ENCODE measurements at regions of chr13 and their contacts with region 1.

Region 1: GRCh38 chr13:39616087-39616694 is 13.2 kb upstream of the LHFPL6 start:
- DNase-seq: peak; percentile 39 to 44 (median 40)
- H3K4me3 ChIP-seq: no peak overlapping the region
- H3K4me3 Mint-ChIP-seq: no peak overlapping the region
- H3K27ac ChIP-seq: no peak overlapping the region
- H3K27ac Mint-ChIP-seq: no peak overlapping the region
- H3K4me1 ChIP-seq: no peaks in the 10 kb centered on the region
- H3K4me1 Mint-ChIP-seq: no peaks in the 10 kb centered on the region
- H3K27me3 ChIP-seq: no peaks in the 10 kb centered on the region
- H3K27me3 Mint-ChIP-seq: peaks cover 0 to 7% of the 10 kb centered on the region in 2 donors

Region 2: GRCh38 chr13:38970380-38971051 is 645.7 kb before region 1 on chr13:
- CTCF ChIA-PET with region 1: interaction called, 10 read pairs
- POLR2A ChIA-PET with region 1: no interaction called
- intact Hi-C with region 1: no loop called
- DNase-seq: no peak
- H3K4me3 ChIP-seq: no peak overlapping the region
- H3K4me3 Mint-ChIP-seq: no peak overlapping the region
- H3K27ac ChIP-seq: no peak overlapping the region
- H3K27ac Mint-ChIP-seq: no peak overlapping the region
- H3K4me1 ChIP-seq: no peaks in the 10 kb centered on the region
- H3K4me1 Mint-ChIP-seq: no peaks in the 10 kb centered on the region
- H3K27me3 ChIP-seq: no peaks in the 10 kb centered on the region
- H3K27me3 Mint-ChIP-seq: peaks cover 0 to 2% of the 10 kb centered on the region in 2 donors

Region 3: DNA sequence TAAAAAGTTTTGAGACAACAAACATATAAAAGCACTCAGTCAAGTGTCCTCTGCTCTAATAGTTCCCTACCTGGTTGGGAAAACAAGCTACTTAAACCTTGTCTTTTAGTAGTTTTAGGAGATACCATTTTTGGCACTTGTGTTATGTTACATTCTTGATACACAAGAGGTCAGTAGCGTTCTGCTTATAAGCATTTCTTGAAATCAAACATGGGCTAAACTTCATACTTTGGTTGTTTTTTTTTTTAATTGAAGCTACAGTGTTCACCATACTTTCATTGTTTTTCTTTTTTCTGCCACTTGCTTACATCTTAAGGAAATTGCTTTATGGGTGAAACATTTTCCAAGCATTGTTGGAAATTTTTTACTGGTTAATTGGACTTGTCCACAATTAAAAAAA is 565.0 kb before region 1 on chr13:
- CTCF ChIA-PET with region 1: interaction called, 18 read pairs
- POLR2A ChIA-PET with region 1: no interaction called
- intact Hi-C with region 1: loop called (anchors 1 kb)
- DNase-seq: peak in 4 of 5 donors; percentile 19 to 26 (median 22)
- H3K4me3 ChIP-seq: no peak overlapping the region
- H3K4me3 Mint-ChIP-seq: no peak overlapping the region
- H3K27ac ChIP-seq: no peak overlapping the region
- H3K27ac Mint-ChIP-seq: no peak overlapping the region
- H3K4me1 ChIP-seq: no peaks in the 10 kb centered on the region
- H3K4me1 Mint-ChIP-seq: peaks cover 4 to 12% (median 7%) of the 10 kb centered on the region in 4 donors
- H3K27me3 ChIP-seq: no peaks in the 10 kb centered on the region
- H3K27me3 Mint-ChIP-seq: no peaks in the 10 kb centered on the region

Region 4: GRCh38 chr13:39144941-39145533 is 471.2 kb before region 1 on chr13:
- CTCF ChIA-PET with region 1: interaction called, 12 read pairs
- POLR2A ChIA-PET with region 1: no interaction called
- intact Hi-C with region 1: no loop called
- DNase-seq: peak in 1 of 5 donors; percentile 10
- H3K4me3 ChIP-seq: no peak overlapping the region
- H3K4me3 Mint-ChIP-seq: no peak overlapping the region
- H3K27ac ChIP-seq: no peak overlapping the region
- H3K27ac Mint-ChIP-seq: peak overlapping the region in 1 of 7 donors; percentile 27
- H3K4me1 ChIP-seq: no peaks in the 10 kb centered on the region
- H3K4me1 Mint-ChIP-seq: peaks cover 5 to 15% (median 7%) of the 10 kb centered on the region in 4 donors
- H3K27me3 ChIP-seq: no peaks in the 10 kb centered on the region
- H3K27me3 Mint-ChIP-seq: peaks cover 5 to 11% of the 10 kb centered on the region in 2 donors

Region 5: DNA sequence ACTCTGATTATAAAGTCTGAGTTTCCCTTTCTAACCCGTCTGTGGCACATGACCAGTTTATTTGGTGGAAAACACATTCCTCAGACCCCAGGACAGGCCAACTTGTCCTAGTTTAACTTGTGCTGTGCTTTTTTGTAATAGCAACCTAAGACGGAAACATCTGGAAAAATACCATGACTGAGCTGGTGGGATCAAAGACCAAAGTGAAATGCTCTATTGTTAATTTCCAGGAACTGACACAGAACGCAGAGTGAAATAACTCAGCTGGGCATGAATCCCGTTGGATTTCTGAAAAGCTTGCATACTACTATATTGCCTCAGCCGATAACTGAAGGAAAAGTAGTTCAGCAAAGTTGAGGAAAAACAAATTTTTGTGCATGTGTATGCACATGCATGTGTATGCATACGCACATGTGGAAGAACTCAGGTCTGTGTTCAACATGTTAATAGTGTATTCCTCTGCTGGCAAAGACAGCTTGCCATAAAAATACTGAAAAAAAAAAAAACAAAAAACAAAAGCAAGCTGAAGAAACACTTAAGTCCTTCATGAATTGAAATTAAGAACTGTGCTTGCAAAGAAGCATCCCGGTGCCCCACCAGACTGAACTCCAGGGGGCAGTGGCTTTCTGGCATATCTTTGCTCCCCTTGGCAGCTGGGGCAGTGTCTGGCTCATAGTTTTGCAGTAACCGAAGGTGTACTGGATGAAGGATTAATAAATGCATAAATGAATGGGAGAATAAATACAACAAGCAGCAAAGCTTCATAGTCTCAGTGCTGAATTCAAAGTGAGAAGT is 201.0 kb before region 1 on chr13:
- CTCF ChIA-PET with region 1: no interaction called
- POLR2A ChIA-PET with region 1: no interaction called
- intact Hi-C with region 1: loop called (anchors 10 kb)
- DNase-seq: no peak
- H3K4me3 ChIP-seq: no peak overlapping the region
- H3K4me3 Mint-ChIP-seq: no peak overlapping the region
- H3K27ac ChIP-seq: no peak overlapping the region
- H3K27ac Mint-ChIP-seq: no peak overlapping the region
- H3K4me1 ChIP-seq: no peaks in the 10 kb centered on the region
- H3K4me1 Mint-ChIP-seq: no peaks in the 10 kb centered on the region
- H3K27me3 ChIP-seq: no peaks in the 10 kb centered on the region
- H3K27me3 Mint-ChIP-seq: peaks cover 5 to 6% of the 10 kb centered on the region in 2 donors

Region 6: GRCh38 chr13:39602277-39602613 is 13.9 kb before region 1 on chr13:
- CTCF ChIA-PET with region 1: interaction called, 10 read pairs
- POLR2A ChIA-PET with region 1: no interaction called
- intact Hi-C with region 1: no loop called
- DNase-seq: no peak
- H3K4me3 ChIP-seq: peak overlapping the region in 1 of 2 donors; percentile 30
- H3K4me3 Mint-ChIP-seq: peak overlapping the region; percentile 46 to 86 (median 68)
- H3K27ac ChIP-seq: no peak overlapping the region
- H3K27ac Mint-ChIP-seq: no peak overlapping the region
- H3K4me1 ChIP-seq: peaks cover 7% of the 10 kb centered on the region
- H3K4me1 Mint-ChIP-seq: peaks cover 6 to 16% (median 12%) of the 10 kb centered on the region in 4 donors
- H3K27me3 ChIP-seq: peaks cover 13% of the 10 kb centered on the region
- H3K27me3 Mint-ChIP-seq: peaks cover 25 to 30% of the 10 kb centered on the region in 2 donors

Region 7: GRCh38 chr13:39676315-39676876 is 60.2 kb after region 1 on chr13:
- CTCF ChIA-PET with region 1: interaction called, 4 read pairs
- POLR2A ChIA-PET with region 1: no interaction called
- intact Hi-C with region 1: loop called (anchors 1 kb)
- DNase-seq: peak in 4 of 5 donors; percentile 41 to 50 (median 44)
- H3K4me3 ChIP-seq: no peak overlapping the region
- H3K4me3 Mint-ChIP-seq: no peak overlapping the region
- H3K27ac ChIP-seq: no peak overlapping the region
- H3K27ac Mint-ChIP-seq: no peak overlapping the region
- H3K4me1 ChIP-seq: no peaks in the 10 kb centered on the region
- H3K4me1 Mint-ChIP-seq: peaks cover 0 to 2% (median under 1%) of the 10 kb centered on the region in 4 donors
- H3K27me3 ChIP-seq: no peaks in the 10 kb centered on the region
- H3K27me3 Mint-ChIP-seq: no peaks in the 10 kb centered on the region

Region 8: GRCh38 chr13:40130871-40131636 is 514.9 kb after region 1 on chr13:
- CTCF ChIA-PET with region 1: no interaction called
- POLR2A ChIA-PET with region 1: no interaction called
- intact Hi-C with region 1: no loop called
- DNase-seq: no peak
- H3K4me3 ChIP-seq: no peak overlapping the region
- H3K4me3 Mint-ChIP-seq: no peak overlapping the region
- H3K27ac ChIP-seq: no peak overlapping the region
- H3K27ac Mint-ChIP-seq: no peak overlapping the region
- H3K4me1 ChIP-seq: peaks cover 33% of the 10 kb centered on the region
- H3K4me1 Mint-ChIP-seq: peaks cover 21 to 39% (median 28%) of the 10 kb centered on the region in 4 donors
- H3K27me3 ChIP-seq: no peaks in the 10 kb centered on the region
- H3K27me3 Mint-ChIP-seq: no peaks in the 10 kb centered on the region

Region 9: GRCh38 chr13:40172149-40172591 is 556.0 kb after region 1 on chr13:
- CTCF ChIA-PET with region 1: no interaction called
- POLR2A ChIA-PET with region 1: no interaction called
- intact Hi-C with region 1: no loop called
- DNase-seq: no peak
- H3K4me3 ChIP-seq: no peak overlapping the region
- H3K4me3 Mint-ChIP-seq: no peak overlapping the region
- H3K27ac ChIP-seq: no peak overlapping the region
- H3K27ac Mint-ChIP-seq: no peak overlapping the region
- H3K4me1 ChIP-seq: no peaks in the 10 kb centered on the region
- H3K4me1 Mint-ChIP-seq: peaks cover 7 to 11% (median 9%) of the 10 kb centered on the region in 4 donors
- H3K27me3 ChIP-seq: no peaks in the 10 kb centered on the region
- H3K27me3 Mint-ChIP-seq: no peaks in the 10 kb centered on the region

Measured in CD4-positive, alpha-beta memory T cell (primary cell).